Natural killer cell (primary cell): ENCODE measurements at regions of chr14 and their contacts with region 1.

Region 1: GRCh38 chr14:99982537-99983250 is 82.5 kb upstream of the EVL start:
- DNase-seq: peak; percentile 59 to 89
- ATAC-seq: peak; percentile 95 to 100 (median 100)
- H3K4me3 ChIP-seq: no peak overlapping the region
- H3K4me3 Mint-ChIP-seq: no peak overlapping the region
- H3K27ac ChIP-seq: no peak overlapping the region
- H3K27ac Mint-ChIP-seq: no peak overlapping the region
- H3K4me1 ChIP-seq: no peaks in the 10 kb centered on the region
- H3K4me1 Mint-ChIP-seq: peaks cover 0 to 4% of the 10 kb centered on the region in 2 donors
- H3K27me3 ChIP-seq: no peaks in the 10 kb centered on the region
- H3K27me3 Mint-ChIP-seq: no peaks in the 10 kb centered on the region
- CTCF ChIP-seq: peak; percentile 97

Region 2: GRCh38 chr14:100025111-100025510 is 42.4 kb after region 1 on chr14:
- intact Hi-C with region 1: loop called (anchors 2 kb)
- DNase-seq: peak in 1 of 2 donors; percentile 46
- ATAC-seq: peak; percentile 49 to 76 (median 75)
- H3K4me3 ChIP-seq: no peak overlapping the region
- H3K4me3 Mint-ChIP-seq: no peak overlapping the region
- H3K27ac ChIP-seq: no peak overlapping the region
- H3K27ac Mint-ChIP-seq: peak overlapping the region in 1 of 2 donors; percentile 20
- H3K4me1 ChIP-seq: peaks cover 6% of the 10 kb centered on the region
- H3K4me1 Mint-ChIP-seq: peaks cover 11 to 15% of the 10 kb centered on the region in 2 donors
- H3K27me3 ChIP-seq: no peaks in the 10 kb centered on the region
- H3K27me3 Mint-ChIP-seq: no peaks in the 10 kb centered on the region
- CTCF ChIP-seq: no peak

Region 3: DNA sequence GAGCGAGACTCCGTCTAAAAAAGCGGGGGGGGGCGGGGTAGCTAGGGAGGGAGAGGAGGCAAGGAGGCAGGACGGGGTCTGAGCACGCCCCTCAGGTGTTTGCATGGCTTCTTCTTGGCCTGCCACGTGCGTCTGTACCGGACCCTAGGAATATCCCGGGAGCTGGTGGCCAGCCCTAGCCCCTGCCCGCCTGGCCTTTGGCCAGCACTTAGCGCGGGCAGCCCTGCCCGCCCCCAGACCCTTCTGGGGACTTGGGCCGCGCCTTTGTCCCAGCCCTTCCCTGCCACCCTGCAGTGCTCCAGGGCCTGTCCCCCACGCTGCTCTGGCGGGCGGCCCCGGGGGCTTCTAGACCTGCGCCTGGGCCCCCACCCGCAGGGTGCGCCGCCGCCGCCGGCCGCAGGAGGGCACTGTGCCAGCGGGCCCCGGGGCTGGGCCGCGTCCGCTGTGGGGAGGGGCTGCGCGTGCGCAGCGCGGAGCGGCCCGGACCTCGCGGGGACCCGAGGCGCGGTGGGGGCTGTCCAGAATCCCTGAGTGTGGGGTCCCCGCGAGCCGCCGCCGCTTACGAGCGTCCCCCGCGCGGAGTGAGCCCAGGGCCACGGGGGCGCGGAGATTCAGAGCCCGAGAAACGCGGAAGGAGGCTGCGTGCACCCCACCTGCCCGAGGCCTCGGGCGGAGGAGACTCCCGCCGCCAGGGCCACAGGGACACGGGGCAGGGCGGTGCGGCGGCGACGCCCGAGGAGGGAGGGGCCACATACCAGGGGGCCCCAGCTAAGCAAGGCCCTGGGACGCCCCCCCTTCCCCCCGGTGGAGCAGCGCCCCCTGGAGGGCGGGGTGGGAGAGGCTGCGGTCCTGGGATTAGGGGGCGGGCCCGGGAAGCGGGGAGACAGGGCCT is 302.6 kb after region 1 on chr14:
- intact Hi-C with region 1: loop called (anchors 5 kb)
- DNase-seq: peak; percentile 83 to 90
- ATAC-seq: peak; percentile 93 to 96 (median 95)
- H3K4me3 ChIP-seq: peak overlapping the region; percentile 68
- H3K4me3 Mint-ChIP-seq: peak overlapping the region; percentile 47
- H3K27ac ChIP-seq: peak overlapping the region; percentile 73
- H3K27ac Mint-ChIP-seq: peak overlapping the region; percentile 53 to 83
- H3K4me1 ChIP-seq: peaks cover 14% of the 10 kb centered on the region
- H3K4me1 Mint-ChIP-seq: peaks cover 5 to 6% of the 10 kb centered on the region in 2 donors
- H3K27me3 ChIP-seq: no peaks in the 10 kb centered on the region
- H3K27me3 Mint-ChIP-seq: no peaks in the 10 kb centered on the region
- CTCF ChIP-seq: peak; percentile 95